HepG2 (cell line): ENCODE measurements at regions of chr22 and their contacts with region 1.

Region 1: DNA sequence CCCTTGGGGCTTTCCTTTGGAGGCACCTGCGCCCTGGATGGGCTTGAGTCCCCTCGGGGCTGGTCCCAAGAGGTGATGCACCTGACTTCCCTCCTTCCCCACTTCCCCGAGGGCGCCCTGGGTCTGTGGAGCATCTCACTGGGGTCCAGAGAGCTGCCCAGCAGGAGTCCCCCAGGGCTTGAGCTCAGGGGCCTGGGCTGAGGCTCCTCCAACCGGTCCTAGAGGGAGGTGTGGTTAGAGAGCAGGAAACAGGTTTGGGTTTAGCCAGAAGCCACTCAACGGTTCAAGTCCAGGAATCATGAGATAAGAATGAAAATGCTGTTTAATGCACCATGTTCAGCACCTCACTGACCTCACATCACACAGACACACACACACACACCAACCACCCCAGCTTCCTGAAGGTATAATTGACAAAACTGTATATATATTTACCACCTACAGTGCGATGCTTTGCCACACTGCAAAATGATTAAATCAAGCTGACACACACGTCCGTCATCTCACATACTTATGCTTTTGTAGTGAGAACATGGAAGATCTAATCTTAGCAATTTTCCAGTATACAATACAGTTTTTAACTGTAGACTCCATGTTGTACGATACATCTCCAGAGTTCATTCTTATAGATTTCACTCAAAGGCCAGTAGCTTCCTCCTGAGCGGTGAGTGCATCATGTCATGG is 628 bp upstream of the IGLL1 start:
- DNase-seq: no peak
- ATAC-seq: no peak
- H3K4me3 ChIP-seq: no peak overlapping the region
- H3K27ac ChIP-seq: no peak overlapping the region
- H3K4me1 ChIP-seq: no peaks in the 10 kb centered on the region
- H3K27me3 ChIP-seq: peaks cover 3 to 27% of the 10 kb centered on the region in 2 experiments; a peak in 3 of 5 replicates
- CTCF ChIP-seq: no peak
- EP300 ChIP-seq: no peak
- POLR2A ChIP-seq: no peak
- RAD21 ChIP-seq: no peak

Region 2: DNA sequence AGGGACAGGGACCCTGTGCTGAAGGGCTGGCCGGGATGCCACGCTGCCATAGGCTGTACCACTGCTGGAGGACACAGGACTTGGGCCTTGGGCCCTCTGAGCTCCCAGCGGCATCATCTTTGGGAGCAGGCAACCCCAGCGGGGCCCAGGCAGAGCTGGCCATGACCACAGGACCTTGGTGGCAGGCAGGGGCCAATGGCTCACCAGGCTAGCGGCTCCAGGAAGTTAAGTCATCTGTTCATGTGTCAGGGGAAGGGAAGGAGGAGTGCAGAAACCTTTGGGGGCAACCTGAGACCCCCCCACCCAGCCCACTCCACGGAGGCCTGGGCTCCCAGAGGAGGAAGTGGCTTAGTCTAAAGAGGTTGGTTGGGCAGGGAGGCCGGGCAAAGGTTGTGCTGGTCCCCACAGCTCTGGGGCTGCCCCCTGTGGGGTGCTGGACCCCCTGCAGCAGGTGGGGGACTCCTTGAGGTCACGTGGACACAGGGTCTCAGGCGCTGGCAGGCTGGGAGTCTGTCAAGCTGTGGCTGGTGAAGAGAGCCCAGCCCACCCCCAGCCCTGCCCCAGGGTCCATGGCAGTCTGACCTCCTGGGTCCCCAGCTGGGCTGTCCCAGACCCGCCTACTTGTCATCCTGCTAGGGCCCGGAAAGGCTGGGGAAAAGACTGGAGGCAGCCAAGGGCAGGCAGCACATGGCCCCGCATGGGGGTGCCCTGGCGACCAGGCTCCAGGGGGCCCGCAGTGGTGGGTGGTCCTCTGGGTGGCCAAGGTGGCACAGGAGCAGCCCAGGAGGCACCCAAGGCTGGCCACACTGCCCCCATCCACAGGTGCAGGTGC is 185.0 kb before region 1 on chr22:
- CTCF ChIA-PET with region 1: no interaction called
- POLR2A ChIA-PET with region 1: no interaction called
- in situ Hi-C with region 1: loop called (anchors 10 kb)
- intact Hi-C with region 1: no loop called
- DNase-seq: no peak
- ATAC-seq: no peak
- H3K4me3 ChIP-seq: no peak overlapping the region
- H3K27ac ChIP-seq: no peak overlapping the region
- H3K4me1 ChIP-seq: no peaks in the 10 kb centered on the region
- H3K27me3 ChIP-seq: peaks cover 6 to 34% of the 10 kb centered on the region in 2 experiments
- CTCF ChIP-seq: no peak
- EP300 ChIP-seq: no peak
- POLR2A ChIP-seq: no peak
- RAD21 ChIP-seq: no peak

Region 3: GRCh38 chr22:23591201-23591791 is 10.6 kb after region 1 on chr22:
- CTCF ChIA-PET with region 1: no interaction called
- POLR2A ChIA-PET with region 1: no interaction called
- in situ Hi-C with region 1: no loop called
- intact Hi-C with region 1: no loop called
- DNase-seq: peak; percentile 41
- ATAC-seq: peak; percentile 92
- H3K4me3 ChIP-seq: no peak overlapping the region
- H3K27ac ChIP-seq: no peak overlapping the region
- H3K4me1 ChIP-seq: peaks cover 20% of the 10 kb centered on the region
- H3K27me3 ChIP-seq: no peaks in the 10 kb centered on the region; a peak in 2 of 5 replicates
- CTCF ChIP-seq: peak; percentile 98
- EP300 ChIP-seq: no peak
- POLR2A ChIP-seq: no peak
- RAD21 ChIP-seq: peak; percentile 88